PC-3 (cell line): ENCODE measurements at regions of chrX and their contacts with region 1.

Region 1: GRCh38 chrX:121579016-121579760 is 531.8 kb downstream of the GLUD2 start:
- DNase-seq: peak; percentile 57
- ATAC-seq: peak; percentile 40; the same call in 1 of the 2 replicates
- H3K4me3 ChIP-seq: no peak overlapping the region
- H3K27ac ChIP-seq: no peak overlapping the region
- H3K4me1 ChIP-seq: no peaks in the 10 kb centered on the region
- H3K27me3 ChIP-seq: no peaks in the 10 kb centered on the region
- CTCF ChIP-seq: peak; percentile 71

Region 2: DNA sequence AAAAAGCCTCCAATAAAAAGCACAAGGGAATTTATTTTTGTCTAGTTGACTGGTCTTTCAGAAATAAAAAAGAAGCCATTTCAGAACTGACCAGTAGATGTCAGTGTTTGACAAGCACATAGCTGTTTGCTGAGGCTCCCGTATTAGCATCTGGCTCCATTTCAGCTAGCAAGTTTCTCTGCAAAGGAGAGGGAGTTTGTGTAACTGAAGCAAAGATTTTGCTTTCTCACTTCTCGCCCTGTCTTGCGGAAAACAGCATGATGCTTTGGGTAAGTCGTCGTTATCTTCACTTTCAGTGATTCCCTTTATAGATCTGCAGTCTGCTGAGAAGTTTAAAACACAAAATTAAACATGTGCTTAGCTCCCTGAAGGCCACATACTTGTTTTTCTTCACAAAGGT is 789.1 kb before region 1 on chrX:
- CTCF ChIA-PET with region 1: no interaction called
- POLR2A ChIA-PET with region 1: no interaction called
- intact Hi-C with region 1: loop called (anchors 2 kb)
- DNase-seq: peak; percentile 86
- ATAC-seq: 0 out of 2 replicates have a peak, but pooled peaks have one; percentile 29
- H3K4me3 ChIP-seq: no peak overlapping the region
- H3K27ac ChIP-seq: no peak overlapping the region
- H3K4me1 ChIP-seq: peaks cover 17% of the 10 kb centered on the region
- H3K27me3 ChIP-seq: no peaks in the 10 kb centered on the region
- CTCF ChIP-seq: peak; percentile 74

Region 3: DNA sequence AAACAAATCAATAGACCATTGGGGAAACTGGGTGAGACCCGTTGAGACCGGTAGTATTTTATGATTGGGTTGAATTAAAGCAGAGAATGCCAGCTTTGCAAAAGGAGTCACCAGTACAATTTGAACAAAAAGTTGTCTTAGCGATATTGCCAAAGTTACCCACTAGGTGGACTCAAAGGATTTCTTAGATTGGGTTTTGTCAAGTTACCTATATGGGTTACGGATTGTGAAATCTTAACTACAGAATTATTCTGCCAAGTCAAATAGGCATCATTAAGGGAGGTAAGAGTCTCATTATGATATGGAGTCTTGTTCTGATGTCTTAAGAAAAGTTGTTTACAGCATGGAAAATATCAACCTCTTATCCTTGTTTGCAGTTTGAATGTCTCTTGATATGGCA is 578.6 kb before region 1 on chrX:
- CTCF ChIA-PET with region 1: no interaction called
- POLR2A ChIA-PET with region 1: no interaction called
- intact Hi-C with region 1: no loop called
- DNase-seq: peak; percentile 75
- ATAC-seq: peak; percentile 42; the same call in 1 of the 2 replicates
- H3K4me3 ChIP-seq: no peak overlapping the region
- H3K27ac ChIP-seq: no peak overlapping the region
- H3K4me1 ChIP-seq: no peaks in the 10 kb centered on the region
- H3K27me3 ChIP-seq: no peaks in the 10 kb centered on the region
- CTCF ChIP-seq: peak; percentile 64

Region 4: DNA sequence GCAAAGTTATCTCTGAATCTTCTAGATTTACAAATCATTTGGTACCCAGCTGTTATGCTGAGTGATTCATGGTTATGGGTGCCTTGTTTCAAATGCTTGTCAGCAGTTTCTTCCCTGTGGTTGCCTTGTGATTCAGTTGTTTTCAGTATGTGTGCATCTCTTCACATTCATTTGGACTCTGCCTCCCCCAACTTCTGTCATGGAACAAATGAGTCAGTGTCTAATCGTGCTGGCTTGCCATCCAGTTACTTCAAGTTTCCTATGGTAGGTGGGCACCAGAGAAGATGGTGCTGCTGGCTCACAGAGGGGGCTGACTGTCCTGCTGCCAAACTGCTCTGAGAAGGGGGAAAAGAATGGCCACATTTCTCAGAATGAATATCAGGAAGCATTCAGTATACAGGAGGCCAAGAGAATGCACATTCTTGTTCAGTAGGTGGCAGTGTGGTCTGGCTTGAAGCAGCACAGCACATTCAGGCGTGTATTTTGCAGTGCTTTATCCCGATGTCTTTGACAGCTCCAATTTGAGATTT is 270.8 kb before region 1 on chrX:
- CTCF ChIA-PET with region 1: no interaction called
- POLR2A ChIA-PET with region 1: no interaction called
- intact Hi-C with region 1: loop called (anchors 5 kb)
- DNase-seq: peak; percentile 51
- ATAC-seq: peak; percentile 70
- H3K4me3 ChIP-seq: no peak overlapping the region
- H3K27ac ChIP-seq: no peak overlapping the region
- H3K4me1 ChIP-seq: no peaks in the 10 kb centered on the region
- H3K27me3 ChIP-seq: no peaks in the 10 kb centered on the region
- CTCF ChIP-seq: peak; percentile 65

Region 5: DNA sequence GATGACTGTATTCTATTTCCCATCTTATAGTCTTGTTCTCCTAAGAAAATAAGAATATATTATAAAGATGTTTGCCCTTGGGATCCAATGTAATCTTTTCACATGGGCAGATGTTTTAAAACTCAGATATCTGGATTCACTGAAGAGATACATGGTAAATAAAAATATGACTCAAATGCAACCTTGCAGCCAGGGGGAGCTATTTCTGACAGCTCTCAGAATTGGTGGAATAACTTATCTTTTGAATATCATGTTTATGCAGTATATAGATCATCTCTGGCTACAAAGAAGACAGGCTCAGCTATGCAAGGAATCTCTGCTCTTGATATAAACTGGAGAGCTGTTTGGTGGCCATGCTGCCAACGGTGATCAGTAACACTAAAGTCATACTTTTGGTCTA is 257.0 kb before region 1 on chrX:
- CTCF ChIA-PET with region 1: no interaction called
- POLR2A ChIA-PET with region 1: no interaction called
- intact Hi-C with region 1: loop called (anchors 5 kb)
- DNase-seq: peak; percentile 46
- ATAC-seq: no peak
- H3K4me3 ChIP-seq: no peak overlapping the region
- H3K27ac ChIP-seq: no peak overlapping the region
- H3K4me1 ChIP-seq: no peaks in the 10 kb centered on the region
- H3K27me3 ChIP-seq: no peaks in the 10 kb centered on the region
- CTCF ChIP-seq: peak; percentile 66

Region 6: DNA sequence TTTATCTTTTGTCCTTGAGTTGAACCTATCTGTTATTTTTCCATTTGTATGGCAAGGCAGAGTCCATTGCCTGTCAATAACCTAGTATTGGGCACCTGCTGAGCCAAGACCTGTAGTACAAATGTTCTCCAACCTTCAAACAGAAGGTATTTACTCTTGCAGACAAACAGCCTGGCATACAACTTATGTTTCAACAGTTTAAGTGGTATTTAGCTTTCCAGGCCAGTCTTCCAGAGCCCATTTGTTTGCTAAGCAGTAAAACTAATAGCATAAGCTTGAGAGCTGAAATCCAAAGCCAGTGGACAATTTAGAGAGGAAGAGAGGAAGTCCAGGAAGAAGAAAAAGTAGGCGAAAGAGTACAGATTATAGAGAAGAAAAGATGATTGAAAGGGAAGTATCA is 447.5 kb after region 1 on chrX:
- CTCF ChIA-PET with region 1: no interaction called
- POLR2A ChIA-PET with region 1: no interaction called
- intact Hi-C with region 1: no loop called
- DNase-seq: no peak
- ATAC-seq: no peak
- H3K4me3 ChIP-seq: no peak overlapping the region
- H3K27ac ChIP-seq: no peak overlapping the region
- H3K4me1 ChIP-seq: no peaks in the 10 kb centered on the region
- H3K27me3 ChIP-seq: no peaks in the 10 kb centered on the region
- CTCF ChIP-seq: no peak